ENCODE measurements at regions of chr2 and their contacts with region 1.

Region 1: GRCh38 chr2:239991689-239992314 is 33.3 kb downstream of the NDUFA10 start:
- DNase-seq: peak; percentile 48
- CTCF ChIP-seq: peak; percentile 72

Region 2: GRCh38 chr2:239934571-239935171 is 57.1 kb before region 1 on chr2:
- CTCF ChIA-PET with region 1: interaction called, 12 read pairs
- POLR2A ChIA-PET with region 1: no interaction called
- DNase-seq: peak; percentile 64
- CTCF ChIP-seq: peak; percentile 58

Region 3: GRCh38 chr2:239956818-239957261 is 35.0 kb before region 1 on chr2:
- CTCF ChIA-PET with region 1: interaction called, 10 read pairs
- POLR2A ChIA-PET with region 1: no interaction called
- DNase-seq: no peak
- CTCF ChIP-seq: no peak

Region 4: GRCh38 chr2:239970004-239970623 is 21.7 kb before region 1 on chr2:
- CTCF ChIA-PET with region 1: interaction called, 33 read pairs
- POLR2A ChIA-PET with region 1: no interaction called
- DNase-seq: no peak
- CTCF ChIP-seq: no peak

Region 5: GRCh38 chr2:239979243-239980023 is 12.4 kb before region 1 on chr2:
- CTCF ChIA-PET with region 1: interaction called, 45 read pairs
- POLR2A ChIA-PET with region 1: no interaction called
- DNase-seq: no peak
- CTCF ChIP-seq: no peak

Region 6: DNA sequence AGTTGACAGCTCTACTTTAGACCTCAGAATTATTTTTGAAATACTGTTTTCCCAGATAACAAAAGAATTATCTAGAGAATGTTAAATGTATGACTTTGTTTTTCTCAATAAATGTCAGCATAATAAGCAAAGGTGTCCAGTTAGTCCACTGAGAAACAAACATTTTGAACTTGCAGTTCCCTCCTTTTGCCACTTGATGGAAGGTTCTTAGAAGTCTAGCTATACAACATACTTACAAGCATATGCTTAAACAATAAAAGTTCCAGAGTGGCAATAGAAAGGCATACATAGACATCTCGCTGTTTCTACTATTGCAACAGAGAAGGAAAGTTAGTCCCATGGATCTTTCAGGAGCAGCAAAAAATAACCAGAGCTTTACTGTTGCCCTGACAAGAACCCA is 21.5 kb after region 1 on chr2:
- CTCF ChIA-PET with region 1: interaction called, 11 read pairs
- POLR2A ChIA-PET with region 1: no interaction called
- DNase-seq: no peak
- CTCF ChIP-seq: no peak

Region 7: DNA sequence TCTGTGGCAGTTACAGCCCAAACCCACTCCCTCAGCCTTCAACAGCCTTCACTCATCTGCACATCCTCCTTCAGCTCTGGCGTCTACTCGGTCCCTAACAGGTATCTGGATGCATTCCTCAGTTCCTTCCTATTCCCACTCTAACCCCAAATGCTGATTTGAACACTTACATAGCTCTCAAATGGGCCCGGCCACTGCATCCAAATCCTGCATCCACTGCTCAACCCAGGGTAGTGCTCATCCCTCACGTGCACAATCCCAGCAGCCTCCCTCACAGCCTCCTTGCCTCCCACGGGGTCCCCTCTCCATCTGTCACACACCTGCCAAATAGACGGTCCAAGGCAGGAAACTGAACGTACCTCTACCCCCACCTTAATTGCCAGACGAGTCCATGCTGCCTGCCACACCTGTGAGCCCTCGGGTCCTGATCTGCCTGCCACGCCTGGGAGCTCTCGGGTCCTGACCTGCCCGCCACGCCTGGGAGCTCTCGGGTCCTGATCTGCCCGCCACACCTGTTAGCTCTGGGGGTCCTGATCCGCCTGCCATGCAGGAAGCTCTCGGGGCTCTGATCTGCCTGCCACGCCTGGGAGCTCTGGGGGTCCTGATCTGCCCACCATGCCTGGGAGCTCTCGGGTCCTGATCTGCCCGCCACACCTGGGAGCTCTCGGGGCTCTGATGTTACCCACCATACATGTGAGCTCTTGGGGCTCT is 51.6 kb after region 1 on chr2:
- CTCF ChIA-PET with region 1: no interaction called
- POLR2A ChIA-PET with region 1: no interaction called
- DNase-seq: no peak
- CTCF ChIP-seq: no peak

Region 8: DNA sequence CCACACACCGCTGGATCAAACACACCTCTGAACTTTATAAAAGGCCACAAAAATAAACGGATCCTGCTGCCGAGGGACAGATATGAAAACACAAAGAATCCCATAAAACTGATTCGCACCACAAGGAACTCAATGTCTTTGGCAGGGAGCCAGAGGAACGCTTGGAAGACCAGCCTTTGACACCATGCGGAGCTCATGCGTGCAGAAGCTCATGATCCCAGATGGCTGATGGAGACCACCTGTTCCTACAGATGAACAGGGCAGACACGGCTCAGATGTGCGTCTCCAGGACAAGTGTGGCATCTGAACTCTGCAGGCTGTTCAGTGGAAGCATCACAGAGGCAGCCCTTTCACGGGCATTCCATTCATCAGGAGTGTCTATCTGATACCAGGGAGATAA is 119.4 kb after region 1 on chr2:
- CTCF ChIA-PET with region 1: no interaction called
- POLR2A ChIA-PET with region 1: no interaction called
- DNase-seq: no peak
- CTCF ChIP-seq: no peak

Region 9: GRCh38 chr2:240250985-240251847 is 259.4 kb after region 1 on chr2:
- CTCF ChIA-PET with region 1: no interaction called
- POLR2A ChIA-PET with region 1: no interaction called
- DNase-seq: peak; percentile 64
- CTCF ChIP-seq: no peak